ENCODE measurements at regions of chr18 and their contacts with region 1.

Region 1: DNA sequence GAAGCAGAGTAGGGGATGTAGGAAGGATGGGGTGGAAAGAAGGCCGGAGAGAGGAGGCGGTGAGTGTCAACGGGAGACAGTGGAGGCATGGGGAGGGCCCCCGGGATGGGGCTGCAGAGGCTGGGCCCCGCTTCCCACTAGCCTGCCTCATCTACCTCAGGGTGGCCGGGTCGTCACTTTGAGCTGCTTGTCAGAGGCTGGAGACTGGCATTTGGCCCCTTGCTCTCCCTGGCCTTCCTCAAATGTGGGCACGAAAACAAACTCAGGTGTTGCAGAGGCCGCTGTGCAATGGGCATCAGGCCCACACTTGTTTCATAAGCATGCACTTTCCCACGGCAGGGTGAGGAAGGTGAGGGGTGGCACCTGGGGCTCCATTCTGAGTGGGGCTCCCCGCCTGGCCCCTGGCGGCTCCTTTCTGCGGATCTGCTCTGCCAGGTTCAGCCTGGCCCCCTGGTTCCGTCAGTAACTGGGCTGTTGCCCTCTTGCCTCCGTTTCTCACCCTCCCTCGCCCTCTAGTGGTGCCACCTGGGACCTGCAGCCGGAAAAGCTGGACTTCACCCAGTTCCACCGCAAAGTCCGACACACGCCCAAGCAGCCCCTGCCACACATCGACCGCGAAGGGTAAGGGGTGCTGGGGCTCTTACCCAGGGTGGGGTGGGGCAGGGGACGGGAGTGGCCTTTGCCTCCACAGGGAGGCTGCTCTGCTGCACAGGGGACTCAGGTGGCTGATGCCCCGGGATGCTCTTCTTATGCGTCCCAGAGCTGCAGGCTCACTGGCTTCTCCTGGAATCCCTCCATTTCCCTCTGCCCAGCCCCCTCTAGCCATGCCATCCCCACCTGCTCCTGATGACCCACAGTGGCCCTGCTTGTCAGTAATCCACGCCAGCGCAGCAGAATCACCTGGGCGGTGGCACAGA is 125.4 kb downstream of the CTIF start:
- DNase-seq: peak; percentile 74 to 81 (median 80)
- ATAC-seq: peak; percentile 71 to 83 (median 78)
- H3K4me3 ChIP-seq: no peak overlapping the region
- H3K27ac ChIP-seq: no peak overlapping the region
- H3K4me1 ChIP-seq: peaks cover 0 to 15% (median 3%) of the 10 kb centered on the region in 4 donors
- H3K27me3 ChIP-seq: no peaks in the 10 kb centered on the region
- CTCF ChIP-seq: peak; percentile 83 to 94 (median 86)
- POLR2A ChIP-seq: no peak

Region 2: DNA sequence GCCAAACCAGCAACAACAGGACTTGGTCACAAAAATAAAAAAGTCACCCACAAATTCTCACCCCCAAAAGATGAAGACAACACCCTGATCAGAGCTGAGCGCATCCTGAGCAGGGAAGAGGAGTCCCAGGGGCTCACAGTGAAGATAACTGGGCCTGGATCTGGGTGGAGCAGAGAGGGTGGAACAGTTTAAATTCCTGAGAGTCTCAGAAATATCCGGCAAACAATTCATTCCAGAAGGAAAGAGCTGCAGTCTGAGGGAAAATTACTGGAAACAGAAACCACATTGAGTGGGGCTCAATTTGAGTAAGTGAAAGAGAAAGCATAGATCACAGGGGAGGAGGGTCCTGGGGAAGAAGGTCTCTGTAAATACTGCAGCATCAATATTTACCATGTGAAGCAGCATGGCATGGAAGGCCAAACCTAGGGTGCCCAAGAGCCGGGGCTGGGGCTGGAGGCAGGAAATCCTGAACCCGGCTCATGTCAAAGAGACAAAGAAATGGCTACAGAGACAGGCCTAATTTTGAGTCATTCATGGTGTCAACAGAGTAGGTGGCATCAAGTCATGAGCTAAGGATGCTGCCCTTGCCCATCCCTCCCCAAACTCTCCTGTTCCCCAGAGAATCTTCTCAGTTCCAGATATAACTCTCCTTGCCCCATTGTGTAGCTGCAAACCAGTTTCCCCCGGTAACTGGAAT is 193.6 kb before region 1 on chr18:
- intact Hi-C with region 1: loop called (anchors 5 kb)
- DNase-seq: no peak
- ATAC-seq: no peak
- H3K4me3 ChIP-seq: no peak overlapping the region
- H3K27ac ChIP-seq: no peak overlapping the region
- H3K4me1 ChIP-seq: no peaks in the 10 kb centered on the region
- H3K27me3 ChIP-seq: no peaks in the 10 kb centered on the region
- CTCF ChIP-seq: no peak
- POLR2A ChIP-seq: no peak

Region 3: DNA sequence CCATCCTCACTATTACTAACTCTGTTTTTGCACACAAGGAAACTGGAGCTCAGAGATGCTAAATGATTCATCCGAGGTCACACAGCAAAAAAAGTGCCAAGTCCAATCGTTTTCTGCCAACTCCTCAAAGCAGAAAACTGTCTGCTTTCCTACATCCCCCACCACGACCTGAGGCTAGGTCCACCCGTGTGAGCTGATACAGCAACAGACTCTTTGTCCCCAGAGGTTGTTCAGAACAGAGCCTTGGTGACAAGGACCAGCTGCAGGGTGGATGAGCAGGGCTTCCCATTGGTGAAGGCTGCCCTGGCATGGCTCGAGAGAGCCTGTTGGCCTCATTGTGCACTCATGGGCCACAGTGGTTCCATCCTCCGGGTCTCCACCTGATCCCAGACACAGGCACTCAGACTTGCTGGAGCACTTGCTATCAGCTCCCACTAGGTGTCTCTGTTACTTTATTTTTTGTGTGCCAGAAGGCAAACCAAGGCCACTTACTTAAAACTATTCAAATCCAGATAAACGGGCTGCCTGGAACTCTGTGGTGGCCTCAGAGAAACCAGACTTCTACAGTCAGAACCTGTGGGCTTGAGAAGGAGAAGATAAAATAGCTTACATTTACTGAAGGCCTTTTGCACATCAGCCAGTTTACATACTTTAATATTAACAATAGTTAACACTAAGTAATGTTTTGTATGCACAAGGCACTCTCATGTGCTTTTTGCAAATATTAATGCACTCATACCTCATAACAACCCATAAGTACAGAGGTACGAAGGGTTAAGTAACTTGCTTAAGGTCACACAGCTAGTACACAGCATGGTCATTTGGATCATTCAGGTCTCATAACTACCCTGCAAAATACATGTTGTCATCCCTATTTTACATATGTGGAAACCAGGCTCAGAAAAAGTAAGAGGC is 188.3 kb before region 1 on chr18:
- intact Hi-C with region 1: loop called (anchors 5 kb)
- DNase-seq: no peak
- ATAC-seq: peak; percentile 97 to 99 (median 98)
- H3K4me3 ChIP-seq: no peak overlapping the region
- H3K27ac ChIP-seq: no peak overlapping the region
- H3K4me1 ChIP-seq: peaks cover 0 to 6% (median 2%) of the 10 kb centered on the region in 4 donors
- H3K27me3 ChIP-seq: no peaks in the 10 kb centered on the region
- CTCF ChIP-seq: peak; percentile 80 to 88 (median 86)
- POLR2A ChIP-seq: no peak

Region 4: DNA sequence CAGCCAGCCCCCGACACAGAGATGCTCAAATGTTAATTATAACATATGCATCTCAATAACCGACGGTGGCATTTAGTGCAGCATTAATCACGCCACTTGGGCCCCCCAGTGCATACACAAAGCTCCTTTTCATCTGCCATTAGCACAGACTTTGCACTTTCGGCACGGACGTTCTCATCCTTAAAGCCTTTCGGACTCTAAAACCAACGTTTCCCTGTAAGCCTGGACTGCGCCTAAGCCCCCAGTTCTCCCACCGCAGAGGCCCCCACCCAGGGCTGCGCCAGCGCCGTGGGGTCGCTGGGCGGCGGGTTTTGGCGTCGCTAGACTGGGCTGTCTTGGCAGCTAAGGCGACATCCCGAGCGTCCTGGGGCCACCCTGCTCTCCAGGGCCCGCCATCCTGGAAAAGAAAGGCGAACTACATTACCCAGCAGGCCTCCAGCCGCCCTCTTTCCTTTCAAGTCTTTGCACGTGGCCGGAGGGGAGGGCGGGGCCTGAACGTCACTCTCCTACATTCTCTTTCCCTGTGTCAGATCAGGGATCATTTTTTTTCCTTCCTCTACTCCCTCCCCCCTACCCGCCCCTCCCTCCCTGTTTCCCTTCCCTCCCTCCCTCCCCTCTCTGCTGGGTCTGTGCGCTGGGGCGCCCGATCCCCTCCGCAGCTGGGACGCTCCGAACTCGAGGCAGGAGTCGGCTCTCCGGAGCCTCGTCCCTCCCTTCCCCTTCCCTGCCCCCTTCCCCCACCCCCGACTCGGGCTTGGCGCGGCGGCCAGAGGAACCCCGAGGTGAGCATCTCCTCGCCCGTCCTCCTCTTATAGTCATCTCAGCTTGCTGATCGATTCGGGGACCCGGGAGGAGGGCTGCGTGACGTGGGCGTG is 125.4 kb before region 1 on chr18 and contains the start of gene CTIF:
- intact Hi-C with region 1: loop called in 1 of 2 experiments (anchors 10 kb)
- DNase-seq: peak; percentile 96 to 98 (median 97)
- ATAC-seq: peak; percentile 77 to 86 (median 84)
- H3K4me3 ChIP-seq: peak within 1 kb of the TSS; percentile 75 to 87 (median 83)
- H3K27ac ChIP-seq: peak within 1 kb of the TSS; percentile 64 to 89 (median 85)
- H3K4me1 ChIP-seq: peaks cover 0 to 18% (median 4%) of the 10 kb centered on the region in 4 donors
- H3K27me3 ChIP-seq: no peaks in the 10 kb centered on the region
- CTCF ChIP-seq: no peak
- POLR2A ChIP-seq: peak; percentile 65
- total RNA-seq, gene CTIF: 29.0 to 60.6 (median 43.1) TPM

Measured in right lobe of liver (tissue), 6 donors.